WTC11 (cell line): ENCODE measurements at regions of chr11 and their contacts with region 1.

Region 1: GRCh38 chr11:67630228-67630942 is 648 bp upstream of the NUDT8 start:
- DNase-seq: peak; percentile 99
- ATAC-seq: peak; percentile 65
- H3K4me3 Mint-ChIP-seq: peak overlapping the region; percentile 79
- H3K27ac Mint-ChIP-seq: peak overlapping the region; percentile 89
- H3K4me1 Mint-ChIP-seq: peaks cover 31% of the 10 kb centered on the region
- H3K27me3 Mint-ChIP-seq: no peaks in the 10 kb centered on the region; the same call in 1 of the 2 replicates
- CTCF ChIP-seq: peak; percentile 66

Region 2: DNA sequence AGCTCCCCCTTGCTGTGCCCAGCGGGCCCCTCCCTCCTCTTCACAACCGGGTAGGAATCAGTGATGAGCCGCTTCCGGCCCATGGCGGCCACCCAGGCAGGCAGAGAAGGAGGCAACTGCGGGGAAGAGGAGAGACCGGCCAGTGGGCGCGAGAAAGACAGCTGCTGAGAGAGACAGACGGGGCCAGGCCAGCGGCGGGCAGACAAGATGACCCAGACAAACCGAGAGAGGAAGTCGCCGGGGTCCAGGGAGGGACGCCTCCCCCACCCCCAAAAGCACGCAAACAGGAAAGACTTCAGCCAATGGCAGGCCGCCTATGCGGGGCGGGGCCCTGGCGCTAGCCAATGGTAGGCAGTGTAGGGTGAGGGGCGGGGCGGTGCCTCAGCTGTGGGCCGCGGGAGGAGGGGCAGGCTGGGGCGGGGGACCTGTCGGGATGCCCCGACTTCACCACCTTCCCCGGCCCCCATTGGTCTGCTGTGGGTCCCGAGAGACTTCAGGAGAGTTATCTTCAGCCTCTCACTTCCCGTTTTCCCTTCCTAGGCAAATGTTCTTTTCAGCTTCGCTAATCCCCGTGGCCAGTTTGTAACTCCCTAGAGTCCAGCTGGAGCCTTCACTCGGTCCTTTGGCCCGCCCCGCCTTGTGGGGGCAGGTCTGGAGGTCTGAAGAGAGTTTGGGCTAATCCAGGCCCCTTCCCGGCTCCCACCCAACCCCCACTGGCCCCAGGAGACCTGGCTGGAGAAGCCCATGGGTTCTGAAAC is 276.9 kb before region 1 on chr11 and contains the start of gene POLD4:
- CTCF ChIA-PET with region 1: interaction called, 11 read pairs
- POLR2A ChIA-PET with region 1: interaction called, 3 read pairs
- DNase-seq: peak; percentile 99
- ATAC-seq: peak; percentile 88
- H3K4me3 Mint-ChIP-seq: peak within 1 kb of the TSS; percentile 91
- H3K27ac Mint-ChIP-seq: peak within 1 kb of the TSS; percentile 90
- H3K4me1 Mint-ChIP-seq: peaks cover 34% of the 10 kb centered on the region
- H3K27me3 Mint-ChIP-seq: peaks cover 10% of the 10 kb centered on the region
- CTCF ChIP-seq: no peak
- total RNA-seq, gene POLD4: 30.3 to 38.3 TPM (median 37.7 TPM) in 3 replicates

Region 3: DNA sequence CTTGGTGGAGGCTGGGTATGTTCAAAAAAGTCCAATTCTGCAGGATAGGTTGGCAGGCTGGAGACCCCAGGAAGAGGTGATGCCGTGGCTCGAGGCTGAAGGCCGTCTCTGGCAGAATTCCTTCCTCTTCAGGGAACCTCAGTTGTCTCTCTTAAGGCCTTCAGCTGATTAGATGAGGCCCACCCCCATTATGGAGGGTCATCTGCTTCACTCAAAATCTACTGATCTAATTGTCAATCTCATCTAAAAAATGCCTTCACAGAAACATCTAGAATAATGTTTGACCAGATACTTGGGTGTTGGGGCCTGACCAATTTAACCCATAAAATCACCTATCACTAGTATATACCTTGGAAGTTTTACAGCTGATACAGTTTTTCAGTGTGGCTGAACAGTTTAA is 74.1 kb before region 1 on chr11:
- CTCF ChIA-PET with region 1: no interaction called
- POLR2A ChIA-PET with region 1: no interaction called
- DNase-seq: no peak
- ATAC-seq: no peak
- H3K4me3 Mint-ChIP-seq: no peak overlapping the region
- H3K27ac Mint-ChIP-seq: no peak overlapping the region
- H3K4me1 Mint-ChIP-seq: no peaks in the 10 kb centered on the region
- H3K27me3 Mint-ChIP-seq: peaks cover 25% of the 10 kb centered on the region
- CTCF ChIP-seq: no peak

Region 4: DNA sequence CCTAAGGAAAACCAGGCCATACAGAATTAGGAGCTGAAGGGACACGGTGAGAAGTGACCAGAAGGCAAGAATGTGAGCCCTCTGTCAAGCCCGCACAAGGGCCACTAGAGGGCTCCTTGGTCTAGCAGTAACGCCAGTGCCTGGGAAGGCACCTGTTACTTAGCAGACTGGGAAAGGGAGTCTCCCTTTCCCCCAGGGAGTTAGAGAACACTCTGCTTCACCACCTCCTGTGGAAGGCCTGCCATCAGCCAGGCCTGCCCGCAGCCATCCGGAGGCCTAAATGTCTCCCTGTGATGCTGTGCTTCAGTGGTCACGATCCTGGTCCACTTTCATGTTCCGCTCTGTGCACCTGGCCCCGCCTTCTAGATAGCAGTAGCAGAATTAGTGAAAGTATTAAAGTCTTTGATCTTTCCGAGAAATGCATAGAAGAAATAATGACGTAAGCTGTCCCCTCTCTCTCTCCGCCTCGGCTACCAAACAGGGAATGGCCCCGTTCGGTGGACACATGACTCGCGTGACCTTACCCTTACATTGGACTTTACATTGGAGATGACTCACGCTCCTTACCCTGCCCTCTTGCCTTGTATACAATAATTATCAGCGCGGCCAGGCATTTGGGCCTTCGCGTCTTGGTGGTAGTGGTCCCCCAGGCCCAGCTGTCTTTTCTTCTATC is 57.5 kb before region 1 on chr11:
- CTCF ChIA-PET with region 1: interaction called, 23 read pairs
- POLR2A ChIA-PET with region 1: no interaction called
- DNase-seq: peak; percentile 71
- ATAC-seq: peak; percentile 60
- H3K4me3 Mint-ChIP-seq: no peak overlapping the region
- H3K27ac Mint-ChIP-seq: no peak overlapping the region
- H3K4me1 Mint-ChIP-seq: no peaks in the 10 kb centered on the region
- H3K27me3 Mint-ChIP-seq: peaks cover 30% of the 10 kb centered on the region
- CTCF ChIP-seq: 0 out of 2 replicates have a peak, but pooled peaks have one; percentile 39

Region 5: GRCh38 chr11:67613960-67614715 is 16.2 kb before region 1 on chr11:
- CTCF ChIA-PET with region 1: interaction called, 200 read pairs
- POLR2A ChIA-PET with region 1: interaction called, 13 read pairs
- DNase-seq: peak; percentile 84
- ATAC-seq: peak; percentile 39
- H3K4me3 Mint-ChIP-seq: no peak overlapping the region
- H3K27ac Mint-ChIP-seq: no peak overlapping the region
- H3K4me1 Mint-ChIP-seq: peaks cover 40% of the 10 kb centered on the region
- H3K27me3 Mint-ChIP-seq: peaks cover 31% of the 10 kb centered on the region
- CTCF ChIP-seq: peak; percentile 76

Region 6: GRCh38 chr11:67658691-67659271 is 28.4 kb after region 1 on chr11:
- CTCF ChIA-PET with region 1: interaction called, 34 read pairs
- POLR2A ChIA-PET with region 1: no interaction called
- DNase-seq: no peak
- ATAC-seq: no peak
- H3K4me3 Mint-ChIP-seq: no peak overlapping the region
- H3K27ac Mint-ChIP-seq: no peak overlapping the region
- H3K4me1 Mint-ChIP-seq: no peaks in the 10 kb centered on the region
- H3K27me3 Mint-ChIP-seq: no peaks in the 10 kb centered on the region; the same call in 1 of the 2 replicates
- CTCF ChIP-seq: no peak

Region 7: DNA sequence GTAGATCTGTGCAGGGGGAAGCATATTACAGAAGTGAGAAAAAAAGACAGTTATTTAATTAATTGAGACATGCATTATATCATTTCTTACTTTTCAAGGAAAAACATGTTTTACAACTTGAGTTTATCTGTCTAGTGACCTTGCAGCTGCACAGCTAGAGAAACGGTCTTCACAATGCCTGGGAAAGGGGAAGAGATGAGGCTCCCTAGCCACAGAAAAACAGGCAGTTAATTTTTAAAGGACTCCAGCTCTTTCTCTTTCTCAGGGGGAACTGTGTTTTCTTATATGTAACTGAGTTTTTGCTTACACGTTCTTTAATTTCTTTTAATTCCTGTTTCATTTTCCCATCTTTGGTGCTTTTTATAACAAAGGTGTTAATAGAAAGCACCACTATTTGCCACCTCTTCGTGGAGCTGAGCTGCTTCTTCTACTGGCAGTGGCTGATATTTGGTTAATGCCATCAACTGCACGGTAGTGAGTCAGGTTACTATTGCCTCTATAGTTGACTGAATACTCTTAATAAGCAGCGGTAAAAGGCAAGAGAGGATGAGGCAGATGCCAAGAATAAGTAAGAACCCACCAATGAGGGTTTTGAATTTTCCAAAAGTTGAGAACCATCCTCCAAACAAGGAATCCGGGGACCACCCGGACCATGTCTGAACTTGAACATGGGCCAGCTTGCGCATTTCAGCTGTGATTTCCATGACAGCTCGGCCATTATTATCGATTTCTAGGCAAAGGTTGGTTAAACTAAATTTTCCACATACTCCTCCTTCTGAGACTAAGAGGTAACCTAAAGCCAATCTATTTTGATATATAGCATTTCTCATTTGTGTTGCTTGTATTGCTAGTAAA is 55.5 kb after region 1 on chr11:
- CTCF ChIA-PET with region 1: interaction called, 16 read pairs
- POLR2A ChIA-PET with region 1: no interaction called
- DNase-seq: no peak
- ATAC-seq: no peak
- H3K4me3 Mint-ChIP-seq: no peak overlapping the region
- H3K27ac Mint-ChIP-seq: 0 out of 2 replicates have a peak overlapping the region, but pooled peaks have one; percentile 81
- H3K4me1 Mint-ChIP-seq: peaks cover 26% of the 10 kb centered on the region
- H3K27me3 Mint-ChIP-seq: no peaks in the 10 kb centered on the region; the same call in 1 of the 2 replicates
- CTCF ChIP-seq: no peak

Region 8: GRCh38 chr11:67698247-67698646 is 67.9 kb after region 1 on chr11:
- CTCF ChIA-PET with region 1: interaction called, 22 read pairs
- POLR2A ChIA-PET with region 1: interaction called, 3 read pairs
- DNase-seq: no peak
- ATAC-seq: peak; percentile 84
- H3K4me3 Mint-ChIP-seq: no peak overlapping the region
- H3K27ac Mint-ChIP-seq: no peak overlapping the region
- H3K4me1 Mint-ChIP-seq: peaks cover 9% of the 10 kb centered on the region
- H3K27me3 Mint-ChIP-seq: peaks cover 13% of the 10 kb centered on the region
- CTCF ChIP-seq: no peak